Posterior vena cava (tissue), 2 donors: ENCODE measurements at regions of chr3 and their contacts with region 1.

Region 1: DNA sequence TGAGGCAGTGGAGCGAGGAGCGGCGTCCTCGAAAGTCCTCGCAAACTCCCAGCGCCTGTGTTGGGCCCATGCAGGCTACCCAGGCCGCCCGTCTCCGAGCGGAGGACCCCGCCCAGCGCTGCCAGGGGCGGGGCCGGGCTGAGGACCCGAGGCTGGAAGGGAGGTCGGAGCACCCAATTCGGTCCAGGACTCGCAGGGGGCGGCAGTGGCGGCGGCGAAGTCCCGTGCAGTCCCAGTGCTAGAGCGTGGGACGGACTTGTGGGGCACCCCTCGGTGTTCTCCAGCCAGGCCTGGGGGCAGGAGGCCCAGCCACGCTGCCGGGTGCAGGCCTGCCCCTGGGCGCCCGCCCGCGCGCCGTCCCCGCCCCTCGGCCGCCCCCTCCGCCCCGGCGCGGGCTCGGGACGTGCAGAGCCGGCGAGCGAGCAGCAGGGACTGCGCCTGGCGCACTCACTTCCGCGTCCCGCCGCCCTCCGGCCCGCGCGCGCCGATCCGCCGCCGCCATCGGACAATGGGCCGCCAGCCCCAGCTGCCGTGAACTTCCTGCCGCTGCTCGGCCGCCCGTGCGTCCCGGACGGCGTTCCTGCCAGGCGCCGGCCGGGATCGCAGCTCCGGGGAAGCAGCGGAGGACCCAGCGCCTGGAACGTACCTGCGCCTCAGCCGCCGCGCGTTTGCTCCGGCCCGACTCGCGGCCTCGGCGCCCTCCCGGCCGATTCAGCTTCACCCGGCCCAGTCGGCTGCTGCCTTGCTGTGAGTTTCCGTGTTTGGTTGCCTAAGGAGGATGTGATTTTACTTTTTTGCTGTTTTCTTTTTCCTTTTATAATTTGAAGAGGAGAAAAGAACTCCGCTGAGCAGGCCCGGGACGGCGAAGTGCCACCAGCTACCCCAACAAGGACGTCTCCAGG is 592 bp upstream of the LIMD1 start:
- DNase-seq: peak; percentile 92

Region 2: GRCh38 chr3:45516829-45517228 is 77.1 kb before region 1 on chr3:
- intact Hi-C with region 1: loop called in 1 of 2 experiments (anchors 10 kb)
- DNase-seq: no peak

Region 3: DNA sequence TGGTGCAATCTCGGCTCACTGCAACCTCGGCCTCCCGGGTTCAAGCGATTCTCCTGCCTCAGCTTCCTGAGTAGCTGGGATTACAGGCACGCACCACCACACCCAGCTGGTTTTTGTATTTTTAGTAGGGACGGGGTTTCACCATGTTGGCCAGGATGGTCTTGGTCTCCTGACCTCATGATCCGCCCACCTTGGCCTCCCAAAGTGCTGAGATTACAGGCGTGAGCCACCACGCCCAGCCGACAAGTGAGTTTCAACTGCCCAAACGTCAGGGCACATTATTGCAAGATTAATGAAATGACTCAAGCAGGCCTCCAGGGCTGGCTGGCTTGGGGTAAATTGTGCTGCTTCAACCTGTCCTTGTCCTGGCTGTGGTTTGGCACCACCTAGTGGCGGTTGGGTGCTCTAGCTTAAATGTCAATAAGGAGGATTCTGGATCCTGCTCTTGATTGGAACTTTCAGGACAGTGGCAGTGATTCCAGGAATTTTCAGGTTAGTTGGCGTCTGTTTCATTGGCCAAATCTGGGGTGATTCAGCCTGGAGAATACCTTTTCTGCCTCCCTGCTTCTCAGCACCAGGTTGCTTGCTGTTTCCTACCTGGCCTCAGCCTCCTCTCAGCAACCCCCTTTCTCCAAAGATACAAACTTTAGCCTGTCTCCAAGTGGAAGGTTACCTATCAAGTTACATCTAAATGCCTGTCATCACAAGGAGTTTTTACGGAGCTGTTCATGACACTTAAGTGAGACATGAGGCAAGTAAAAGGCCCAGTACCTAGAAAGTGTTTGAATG is 62.8 kb after region 1 on chr3:
- intact Hi-C with region 1: loop called (anchors 2 to 5 kb)
- DNase-seq: peak; percentile 97

Region 4: GRCh38 chr3:45677033-45677433 is 83.1 kb after region 1 on chr3:
- intact Hi-C with region 1: no loop called
- DNase-seq: no peak